Activated CD8-positive, alpha-beta memory T cell treated with anti-CD3 and anti-CD28 coated beads, Interleukin-2, amount 10 ng/mL, durations not matched to agents 7 days and 5 days (primary cell): ENCODE measurements at regions of chr19 and their contacts with region 1.

Region 1: GRCh38 chr19:41706741-41707501 is 1.5 kb upstream of the CEACAM5 start:
- DNase-seq: peak; percentile 77
- ATAC-seq: peak; percentile 94
- H3K4me3 Mint-ChIP-seq: peak overlapping the region; percentile 63
- H3K27ac Mint-ChIP-seq: peak overlapping the region; percentile 19
- H3K4me1 Mint-ChIP-seq: peaks cover 3% of the 10 kb centered on the region
- H3K27me3 Mint-ChIP-seq: peaks cover 19% of the 10 kb centered on the region

Region 2: DNA sequence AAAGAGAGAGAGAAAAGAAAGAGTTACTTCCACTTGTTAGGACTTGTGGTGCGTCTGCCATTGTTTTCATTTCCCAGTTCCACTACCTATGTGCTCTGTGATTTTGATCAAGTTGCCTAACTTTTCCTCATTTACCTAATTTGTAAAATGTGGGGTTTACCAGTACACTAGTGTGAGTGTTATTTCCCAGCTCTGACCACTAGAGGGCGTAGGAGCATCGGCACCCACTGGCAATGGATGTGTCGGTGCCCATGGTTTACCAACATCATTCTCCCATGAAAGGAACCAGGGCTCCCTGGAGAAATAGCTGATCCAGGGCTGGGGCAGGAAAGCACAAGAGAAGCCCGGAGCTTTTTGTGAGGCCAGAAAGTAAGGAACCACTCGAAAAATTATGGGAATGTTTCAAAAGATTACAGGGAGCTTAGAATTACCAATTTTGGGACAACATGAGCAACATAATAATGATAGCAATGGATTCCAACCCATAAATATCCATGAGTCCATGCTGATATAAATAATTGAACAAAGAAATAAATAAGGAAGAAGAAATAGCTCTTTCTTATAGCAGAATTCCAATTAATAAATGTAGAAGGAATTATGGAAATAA is 64.9 kb before region 1 on chr19:
- CTCF ChIA-PET with region 1: interaction called, 19 read pairs
- DNase-seq: peak; percentile 74
- ATAC-seq: peak; percentile 73
- H3K4me3 Mint-ChIP-seq: no peak overlapping the region
- H3K27ac Mint-ChIP-seq: no peak overlapping the region
- H3K4me1 Mint-ChIP-seq: no peaks in the 10 kb centered on the region
- H3K27me3 Mint-ChIP-seq: peaks cover 22% of the 10 kb centered on the region

Region 3: DNA sequence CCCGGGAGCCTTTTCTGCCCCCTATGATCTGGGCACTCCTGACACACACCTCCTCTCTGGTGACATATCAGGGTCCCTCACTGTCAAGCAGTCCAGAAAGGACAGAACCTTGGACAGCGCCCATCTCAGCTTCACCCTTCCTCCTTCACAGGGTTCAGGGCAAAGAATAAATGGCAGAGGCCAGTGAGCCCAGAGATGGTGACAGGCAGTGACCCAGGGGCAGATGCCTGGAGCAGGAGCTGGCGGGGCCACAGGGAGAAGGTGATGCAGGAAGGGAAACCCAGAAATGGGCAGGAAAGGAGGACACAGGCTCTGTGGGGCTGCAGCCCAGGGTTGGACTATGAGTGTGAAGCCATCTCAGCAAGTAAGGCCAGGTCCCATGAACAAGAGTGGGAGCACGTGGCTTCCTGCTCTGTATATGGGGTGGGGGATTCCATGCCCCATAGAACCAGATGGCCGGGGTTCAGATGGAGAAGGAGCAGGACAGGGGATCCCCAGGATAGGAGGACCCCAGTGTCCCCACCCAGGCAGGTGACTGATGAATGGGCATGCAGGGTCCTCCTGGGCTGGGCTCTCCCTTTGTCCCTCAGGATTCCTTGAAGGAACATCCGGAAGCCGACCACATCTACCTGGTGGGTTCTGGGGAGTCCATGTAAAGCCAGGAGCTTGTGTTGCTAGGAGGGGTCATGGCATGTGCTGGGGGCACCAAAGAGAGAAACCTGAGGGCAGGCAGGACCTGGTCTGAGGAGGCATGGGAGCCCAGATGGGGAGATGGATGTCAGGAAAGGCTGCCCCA is 10.3 kb before region 1 on chr19:
- CTCF ChIA-PET with region 1: interaction called, 18 read pairs
- DNase-seq: peak; percentile 41
- ATAC-seq: no peak
- H3K4me3 Mint-ChIP-seq: no peak overlapping the region
- H3K27ac Mint-ChIP-seq: no peak overlapping the region
- H3K4me1 Mint-ChIP-seq: no peaks in the 10 kb centered on the region
- H3K27me3 Mint-ChIP-seq: peaks cover 20% of the 10 kb centered on the region

Region 4: GRCh38 chr19:41734617-41735016 is 27.7 kb after region 1 on chr19:
- CTCF ChIA-PET with region 1: interaction called, 12 read pairs
- DNase-seq: no peak
- ATAC-seq: no peak
- H3K4me3 Mint-ChIP-seq: no peak overlapping the region
- H3K27ac Mint-ChIP-seq: no peak overlapping the region
- H3K4me1 Mint-ChIP-seq: no peaks in the 10 kb centered on the region
- H3K27me3 Mint-ChIP-seq: peaks cover 66% of the 10 kb centered on the region

Region 5: DNA sequence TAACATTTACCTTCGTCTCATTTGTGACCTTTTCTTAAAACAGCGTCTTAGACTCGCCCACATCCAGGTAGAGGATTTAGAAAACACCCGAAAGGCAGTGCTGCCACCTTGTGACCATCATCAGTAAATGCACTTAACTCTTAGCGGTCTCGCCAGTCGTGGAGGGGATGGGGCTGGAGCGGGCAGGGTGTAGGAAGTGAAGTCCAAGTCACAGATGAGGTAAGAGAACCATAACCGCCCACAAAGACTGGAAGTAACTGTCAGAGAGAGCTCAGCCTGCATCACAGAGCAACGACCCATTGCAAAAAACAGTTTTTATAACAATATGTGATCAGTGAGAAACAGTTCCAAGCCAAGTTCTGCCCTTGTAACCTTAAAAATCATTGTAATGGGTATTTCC is 78.7 kb after region 1 on chr19:
- CTCF ChIA-PET with region 1: interaction called, 19 read pairs
- DNase-seq: peak; percentile 83
- ATAC-seq: peak; percentile 87
- H3K4me3 Mint-ChIP-seq: no peak overlapping the region
- H3K27ac Mint-ChIP-seq: no peak overlapping the region
- H3K4me1 Mint-ChIP-seq: peaks cover 17% of the 10 kb centered on the region
- H3K27me3 Mint-ChIP-seq: peaks cover 49% of the 10 kb centered on the region